CD4-positive, alpha-beta T cell (primary cell): ENCODE measurements at regions of chr1 and their contacts with region 1.

Region 1: GRCh38 chr1:190043655-190044054 is 434.0 kb downstream of the BRINP3 start:
- DNase-seq: no peak
- ATAC-seq: no peak
- H3K4me3 ChIP-seq: no peak overlapping the region
- H3K4me3 Mint-ChIP-seq: no peak overlapping the region
- H3K27ac ChIP-seq: no peak overlapping the region
- H3K27ac Mint-ChIP-seq: no peak overlapping the region
- H3K4me1 ChIP-seq: no peaks in the 10 kb centered on the region
- H3K4me1 Mint-ChIP-seq: no peaks in the 10 kb centered on the region
- H3K27me3 ChIP-seq: no peaks in the 10 kb centered on the region
- H3K27me3 Mint-ChIP-seq: no peaks in the 10 kb centered on the region
- CTCF ChIP-seq: no peak

Region 2: DNA sequence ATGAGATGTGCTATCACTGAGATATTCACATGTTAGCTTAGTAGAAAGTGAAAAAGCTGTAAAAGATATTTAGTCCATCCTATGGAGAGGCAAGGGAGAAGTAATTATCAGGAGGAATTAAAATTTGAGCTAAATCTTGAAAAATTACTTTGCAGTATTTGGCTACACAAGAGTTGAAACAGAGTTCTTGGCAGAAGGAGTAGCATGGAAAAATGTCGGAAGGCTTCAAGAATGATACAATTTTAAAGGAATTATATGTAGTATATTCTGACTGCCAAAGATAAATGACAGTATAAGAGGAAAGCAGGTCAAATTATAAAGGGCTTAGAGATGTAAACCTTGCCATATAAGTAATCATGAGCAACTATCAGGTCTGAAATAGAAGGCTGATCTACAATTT is 84.9 kb before region 1 on chr1:
- CTCF ChIA-PET with region 1: no interaction called
- POLR2A ChIA-PET with region 1: no interaction called
- intact Hi-C with region 1: no loop called
- DNase-seq: no peak
- ATAC-seq: no peak
- H3K4me3 ChIP-seq: no peak overlapping the region
- H3K4me3 Mint-ChIP-seq: no peak overlapping the region
- H3K27ac ChIP-seq: no peak overlapping the region
- H3K27ac Mint-ChIP-seq: no peak overlapping the region
- H3K4me1 ChIP-seq: no peaks in the 10 kb centered on the region
- H3K4me1 Mint-ChIP-seq: no peaks in the 10 kb centered on the region
- H3K27me3 ChIP-seq: no peaks in the 10 kb centered on the region
- H3K27me3 Mint-ChIP-seq: no peaks in the 10 kb centered on the region
- CTCF ChIP-seq: no peak

Region 3: GRCh38 chr1:190067592-190067991 is 23.9 kb after region 1 on chr1:
- CTCF ChIA-PET with region 1: no interaction called
- POLR2A ChIA-PET with region 1: no interaction called
- intact Hi-C with region 1: loop called in 1 of 2 experiments (anchors 2 kb)
- DNase-seq: no peak
- ATAC-seq: no peak
- H3K4me3 ChIP-seq: no peak overlapping the region
- H3K4me3 Mint-ChIP-seq: no peak overlapping the region
- H3K27ac ChIP-seq: no peak overlapping the region
- H3K27ac Mint-ChIP-seq: no peak overlapping the region
- H3K4me1 ChIP-seq: no peaks in the 10 kb centered on the region
- H3K4me1 Mint-ChIP-seq: no peaks in the 10 kb centered on the region
- H3K27me3 ChIP-seq: no peaks in the 10 kb centered on the region
- H3K27me3 Mint-ChIP-seq: no peaks in the 10 kb centered on the region
- CTCF ChIP-seq: no peak